BJ (cell line): ENCODE measurements at regions of chr11 and their contacts with region 1.

Region 1: GRCh38 chr11:119728651-119729580 is at the start of gene NECTIN1:
- DNase-seq: no peak
- H3K4me3 ChIP-seq: peak within 1 kb of the TSS; percentile 58
- H3K27me3 ChIP-seq: no peaks in the 10 kb centered on the region
- CTCF ChIP-seq: peak; percentile 82
- polyA plus RNA-seq, gene NECTIN1: 1.7 and 3.0 TPM in 2 replicates

Region 2: DNA sequence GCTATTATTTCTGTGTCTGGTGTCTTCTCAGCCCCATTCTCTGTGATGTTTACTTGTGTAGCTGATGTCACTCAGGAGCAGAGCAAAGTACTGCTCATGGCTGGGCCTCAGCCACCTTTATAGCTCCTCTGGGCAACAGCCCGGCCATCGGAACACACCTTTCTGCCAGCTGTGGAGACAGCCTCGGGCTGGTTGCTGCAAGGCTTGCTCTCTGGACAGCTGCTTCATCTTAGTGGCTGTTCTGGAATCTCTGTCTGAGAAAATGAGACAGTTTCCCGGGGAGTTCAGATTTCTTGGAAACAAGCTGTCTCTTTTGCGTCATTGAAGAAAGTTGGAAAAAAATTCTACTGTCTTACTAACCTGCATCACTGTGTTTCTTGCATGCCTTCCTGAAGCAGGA is 325.9 kb before region 1 on chr11:
- CTCF ChIA-PET with region 1: no interaction called
- POLR2A ChIA-PET with region 1: no interaction called
- DNase-seq: peak; percentile 72
- H3K4me3 ChIP-seq: no peak overlapping the region
- H3K27me3 ChIP-seq: no peaks in the 10 kb centered on the region
- CTCF ChIP-seq: no peak

Region 3: DNA sequence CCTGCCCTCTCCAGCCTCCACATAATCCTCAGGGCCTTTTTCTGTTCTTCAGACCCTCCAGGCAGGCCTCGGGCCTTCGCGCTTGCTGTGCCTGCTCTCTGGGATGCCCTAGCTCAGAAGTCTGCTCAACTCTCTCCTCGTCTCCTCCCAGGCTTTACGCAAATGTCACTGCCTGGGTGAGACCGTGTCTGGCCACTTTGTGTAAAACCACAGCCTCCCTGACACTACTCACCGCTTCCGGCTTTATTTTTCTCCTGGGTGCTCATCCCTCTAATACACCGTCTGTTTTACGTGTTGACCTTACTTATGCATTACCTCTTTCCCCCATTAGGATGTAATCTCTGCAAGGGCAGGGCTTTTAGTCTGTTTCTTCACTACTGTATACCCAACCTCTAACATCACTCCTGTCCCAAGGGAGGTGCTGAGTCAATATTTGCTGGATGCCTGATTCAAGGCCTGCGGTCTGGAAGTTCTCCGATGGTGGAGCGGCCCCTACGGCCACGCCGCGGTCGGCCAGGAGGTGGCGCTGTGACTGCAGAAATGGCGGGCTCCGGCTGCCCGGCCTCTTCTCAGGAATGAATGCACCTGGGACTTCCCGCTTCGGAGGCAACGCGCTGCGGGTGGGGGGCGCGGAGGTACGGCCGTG is 247.8 kb before region 1 on chr11:
- CTCF ChIA-PET with region 1: interaction called, 14 read pairs
- POLR2A ChIA-PET with region 1: no interaction called
- DNase-seq: peak; percentile 44
- H3K4me3 ChIP-seq: no peak overlapping the region
- H3K27me3 ChIP-seq: peaks cover 7% of the 10 kb centered on the region
- CTCF ChIP-seq: peak; percentile 98

Region 4: GRCh38 chr11:119673759-119674336 is 55.1 kb before region 1 on chr11:
- CTCF ChIA-PET with region 1: interaction called, 17 read pairs
- POLR2A ChIA-PET with region 1: no interaction called
- DNase-seq: no peak
- H3K4me3 ChIP-seq: no peak overlapping the region
- H3K27me3 ChIP-seq: no peaks in the 10 kb centered on the region
- CTCF ChIP-seq: no peak

Region 5: GRCh38 chr11:119691020-119691666 is 37.8 kb before region 1 on chr11:
- CTCF ChIA-PET with region 1: interaction called, 17 read pairs
- POLR2A ChIA-PET with region 1: no interaction called
- DNase-seq: no peak
- H3K4me3 ChIP-seq: no peak overlapping the region
- H3K27me3 ChIP-seq: no peaks in the 10 kb centered on the region
- CTCF ChIP-seq: no peak

Region 6: DNA sequence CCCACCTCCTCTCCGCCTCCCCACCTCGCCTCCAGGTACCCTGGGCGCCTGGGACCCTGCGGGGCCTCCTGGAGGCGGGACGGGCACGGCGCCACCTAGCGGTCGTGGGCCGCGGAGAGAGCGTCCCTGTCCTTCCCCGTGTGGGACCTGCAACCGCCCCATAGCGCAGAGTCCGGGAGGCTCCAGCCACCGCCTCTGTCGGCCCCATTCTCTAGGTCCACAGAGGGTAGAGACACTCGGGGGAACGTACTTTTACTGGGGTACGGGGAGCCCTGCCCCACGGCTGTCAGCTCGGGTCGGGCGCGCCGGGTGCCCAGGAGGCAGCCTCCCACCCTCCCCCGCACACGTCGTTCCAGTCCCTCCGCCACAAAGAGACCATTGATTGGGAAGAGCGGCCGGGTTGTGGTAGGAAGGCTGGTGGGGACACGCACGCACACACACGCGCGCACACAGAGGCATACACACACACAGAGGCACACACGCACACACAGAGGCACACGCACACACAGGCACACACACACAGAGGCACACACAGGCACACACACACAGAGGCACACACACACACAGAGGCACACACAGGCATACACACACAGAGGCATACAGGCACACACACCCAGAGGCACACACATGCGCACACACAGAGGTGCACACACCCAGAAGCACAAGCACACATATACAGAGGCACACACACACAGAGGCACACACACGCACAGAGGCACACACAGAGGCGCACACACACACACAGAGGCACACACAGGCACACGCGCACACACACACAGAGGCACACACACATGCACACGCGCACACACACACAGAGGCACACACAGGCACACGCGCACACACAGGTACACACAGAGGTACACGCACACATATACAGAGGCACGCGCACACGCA is 12.7 kb after region 1 on chr11:
- CTCF ChIA-PET with region 1: interaction called, 42 read pairs
- POLR2A ChIA-PET with region 1: no interaction called
- DNase-seq: no peak
- H3K4me3 ChIP-seq: no peak overlapping the region
- H3K27me3 ChIP-seq: peaks cover 31% of the 10 kb centered on the region
- CTCF ChIP-seq: peak; percentile 79

Region 7: DNA sequence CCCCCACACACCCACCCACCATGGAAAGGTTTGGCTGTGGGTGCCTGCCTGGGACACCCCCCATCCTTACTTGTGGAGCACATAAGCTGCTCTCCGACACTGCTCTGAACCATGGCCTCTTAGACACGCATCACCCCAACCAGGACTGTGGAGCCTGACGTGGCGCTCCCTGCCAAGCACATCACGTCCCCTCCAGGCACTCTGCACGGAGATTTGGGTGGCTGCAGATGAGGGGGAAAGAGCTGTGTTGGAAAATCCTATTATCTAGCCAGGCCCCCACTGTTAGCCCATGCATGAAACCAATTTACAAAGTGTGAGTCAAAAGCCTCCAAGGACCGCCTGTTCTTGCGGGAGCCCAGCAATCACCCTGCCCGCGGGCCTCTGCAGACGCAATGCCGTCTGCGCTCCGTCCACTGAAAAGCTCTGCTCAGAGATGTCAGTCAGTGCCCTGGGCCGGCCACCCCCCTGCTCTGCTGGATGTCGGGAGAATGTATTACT is 163.4 kb after region 1 on chr11:
- CTCF ChIA-PET with region 1: no interaction called
- POLR2A ChIA-PET with region 1: no interaction called
- DNase-seq: no peak
- H3K4me3 ChIP-seq: no peak overlapping the region
- H3K27me3 ChIP-seq: peaks cover 8% of the 10 kb centered on the region
- CTCF ChIP-seq: no peak

Region 8: GRCh38 chr11:120013325-120014270 is 284.7 kb after region 1 on chr11:
- CTCF ChIA-PET with region 1: no interaction called
- POLR2A ChIA-PET with region 1: no interaction called
- DNase-seq: no peak
- H3K4me3 ChIP-seq: no peak overlapping the region
- H3K27me3 ChIP-seq: peaks cover 15% of the 10 kb centered on the region
- CTCF ChIP-seq: peak; percentile 51